ENCODE measurements at regions of chr1 and their contacts with region 1.

Region 1: DNA sequence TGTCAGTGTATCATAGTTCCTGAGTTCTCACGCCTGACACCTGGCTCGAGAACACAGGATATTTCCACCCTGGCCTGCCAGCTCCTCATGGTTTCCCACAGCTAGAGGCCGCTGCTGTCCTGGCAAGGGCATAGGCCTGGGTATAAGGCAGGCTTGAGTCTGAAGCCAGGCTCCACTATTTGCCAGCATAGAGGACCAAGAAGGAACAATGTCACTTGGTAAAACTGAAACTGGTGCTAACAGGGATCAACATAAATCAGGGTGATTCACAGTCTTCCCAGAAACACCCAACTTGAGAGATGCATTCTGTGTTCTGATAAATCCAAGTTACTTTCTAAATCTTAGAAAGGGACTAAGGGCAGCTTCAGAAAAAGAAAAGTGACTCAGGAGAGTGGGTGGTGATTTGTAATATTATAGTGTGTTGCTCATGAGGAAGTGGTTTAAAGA is 6.9 kb upstream of the S100A2 start:
- DNase-seq: peak; percentile 68
- H3K4me3 Mint-ChIP-seq: no peak overlapping the region
- H3K27ac Mint-ChIP-seq: peak overlapping the region; percentile 32
- H3K4me1 Mint-ChIP-seq: peaks cover 38% of the 10 kb centered on the region
- H3K27me3 Mint-ChIP-seq: peaks cover 11% of the 10 kb centered on the region

Region 2: DNA sequence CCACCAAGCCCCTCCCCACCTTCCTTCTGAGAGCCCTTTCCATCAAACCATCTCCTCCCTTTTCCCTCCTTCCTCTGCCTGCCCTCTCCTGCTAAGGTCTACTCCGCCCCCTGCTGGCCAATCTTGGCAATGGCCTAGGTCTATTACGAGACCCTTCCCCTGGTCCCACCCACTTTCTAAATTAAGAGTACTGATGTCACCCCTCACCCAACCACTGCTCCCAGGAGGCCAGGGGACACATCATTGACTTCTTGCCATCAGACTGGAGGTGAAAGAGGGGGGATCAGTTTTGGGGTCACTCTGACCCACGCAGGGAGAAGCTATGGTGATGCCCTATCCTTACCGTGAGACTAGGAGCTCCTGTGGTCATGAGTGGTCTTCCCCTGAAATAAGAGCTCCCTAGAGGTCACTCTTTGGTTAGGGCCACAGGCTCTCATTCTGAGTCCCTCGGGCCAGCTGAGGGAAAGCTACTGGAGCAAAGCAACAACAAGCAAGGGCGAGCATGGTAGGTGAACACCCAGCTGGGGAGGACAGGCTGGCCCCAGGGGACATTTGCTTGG is 77.5 kb before region 1 on chr1:
- CTCF ChIA-PET with region 1: no interaction called
- POLR2A ChIA-PET with region 1: no interaction called
- DNase-seq: peak; percentile 82
- H3K4me3 Mint-ChIP-seq: no peak overlapping the region
- H3K27ac Mint-ChIP-seq: no peak overlapping the region
- H3K4me1 Mint-ChIP-seq: no peaks in the 10 kb centered on the region
- H3K27me3 Mint-ChIP-seq: peaks cover 28% of the 10 kb centered on the region

Region 3: GRCh38 chr1:153510984-153511410 is 61.6 kb before region 1 on chr1:
- CTCF ChIA-PET with region 1: interaction called, 23 read pairs
- POLR2A ChIA-PET with region 1: no interaction called
- DNase-seq: peak; percentile 84
- H3K4me3 Mint-ChIP-seq: no peak overlapping the region
- H3K27ac Mint-ChIP-seq: peak overlapping the region; percentile 38
- H3K4me1 Mint-ChIP-seq: peaks cover 36% of the 10 kb centered on the region
- H3K27me3 Mint-ChIP-seq: no peaks in the 10 kb centered on the region

Region 4: DNA sequence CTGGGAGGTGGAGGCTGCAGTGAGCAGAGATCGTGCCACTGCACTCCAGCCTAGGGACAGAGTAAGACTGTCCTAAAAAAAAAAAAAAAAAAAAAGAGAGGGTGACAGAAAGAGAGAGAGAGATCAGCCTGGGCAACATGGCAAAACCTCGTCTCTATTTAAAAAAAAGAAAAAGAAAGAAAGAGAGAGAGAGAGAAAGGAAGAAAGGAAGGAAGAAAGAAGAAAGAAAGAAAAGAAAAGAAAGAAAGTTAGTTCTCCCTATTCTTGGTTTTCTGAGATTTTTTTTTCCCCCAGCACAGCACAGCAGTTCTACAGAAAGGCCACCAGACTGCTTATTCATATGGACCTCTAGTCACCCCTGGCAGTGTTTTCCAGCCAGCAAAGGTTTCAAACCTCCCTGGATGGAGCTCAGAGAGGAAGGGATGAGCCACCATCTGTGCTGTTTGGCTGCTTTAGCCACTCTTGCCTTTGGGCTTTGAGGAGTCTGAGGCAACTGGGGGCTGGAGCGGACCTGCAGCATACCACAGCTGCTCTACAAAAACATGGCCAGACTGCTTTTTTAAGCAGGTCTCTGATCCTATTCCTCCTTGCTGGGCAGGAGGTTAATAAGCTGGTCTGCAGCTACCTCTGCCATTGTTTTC is 47.4 kb before region 1 on chr1:
- CTCF ChIA-PET with region 1: interaction called, 11 read pairs
- POLR2A ChIA-PET with region 1: no interaction called
- DNase-seq: no peak
- H3K4me3 Mint-ChIP-seq: no peak overlapping the region
- H3K27ac Mint-ChIP-seq: peak overlapping the region; percentile 19
- H3K4me1 Mint-ChIP-seq: peaks cover 11% of the 10 kb centered on the region
- H3K27me3 Mint-ChIP-seq: no peaks in the 10 kb centered on the region

Region 5: GRCh38 chr1:153545067-153546055 is 27.2 kb before region 1 on chr1 and contains the start of gene S100A4:
- CTCF ChIA-PET with region 1: interaction called, 17 read pairs
- POLR2A ChIA-PET with region 1: interaction called, 3 read pairs
- DNase-seq: peak; percentile 97
- H3K4me3 Mint-ChIP-seq: peak within 1 kb of the TSS; percentile 91
- H3K27ac Mint-ChIP-seq: peak within 1 kb of the TSS; percentile 98
- H3K4me1 Mint-ChIP-seq: peaks cover 85% of the 10 kb centered on the region
- H3K27me3 Mint-ChIP-seq: no peaks in the 10 kb centered on the region
- total RNA-seq, gene S100A4: 678 to 905 TPM

Region 6: DNA sequence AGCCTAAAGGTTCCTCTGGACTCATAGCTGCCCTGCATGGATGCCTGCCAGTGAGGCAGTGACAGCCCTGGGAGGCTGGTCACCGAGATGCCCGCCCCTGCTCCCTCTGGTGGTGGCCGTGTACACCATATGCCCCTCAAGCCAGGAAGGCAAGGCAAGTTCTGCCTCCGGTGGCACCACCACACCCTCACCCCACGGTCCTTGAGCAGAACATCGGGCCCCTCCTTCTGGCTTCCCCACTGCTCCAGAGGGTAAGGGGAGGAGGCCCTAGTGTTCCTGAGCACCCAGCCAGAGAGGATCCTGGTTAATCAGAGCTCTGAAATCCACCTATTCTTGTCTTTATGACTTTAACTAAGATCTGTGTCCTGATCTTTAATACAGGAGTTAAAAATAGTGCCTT is 45.1 kb after region 1 on chr1:
- CTCF ChIA-PET with region 1: interaction called, 13 read pairs
- POLR2A ChIA-PET with region 1: no interaction called
- DNase-seq: peak; percentile 85
- H3K4me3 Mint-ChIP-seq: no peak overlapping the region
- H3K27ac Mint-ChIP-seq: peak overlapping the region; percentile 68
- H3K4me1 Mint-ChIP-seq: peaks cover 7% of the 10 kb centered on the region
- H3K27me3 Mint-ChIP-seq: no peaks in the 10 kb centered on the region

Region 7: GRCh38 chr1:153633716-153634665 is 61.4 kb after region 1 on chr1 and contains the start of gene CHTOP:
- CTCF ChIA-PET with region 1: interaction called, 10 read pairs
- POLR2A ChIA-PET with region 1: no interaction called
- DNase-seq: peak; percentile 98
- H3K4me3 Mint-ChIP-seq: peak within 1 kb of the TSS; percentile 92
- H3K27ac Mint-ChIP-seq: peak within 1 kb of the TSS; percentile 99
- H3K4me1 Mint-ChIP-seq: peaks cover 44% of the 10 kb centered on the region
- H3K27me3 Mint-ChIP-seq: no peaks in the 10 kb centered on the region
- total RNA-seq, gene CHTOP: 96.1 to 98.3 TPM

Region 8: GRCh38 chr1:153866045-153866850 is 293.7 kb after region 1 on chr1:
- CTCF ChIA-PET with region 1: no interaction called
- POLR2A ChIA-PET with region 1: no interaction called
- DNase-seq: no peak
- H3K4me3 Mint-ChIP-seq: no peak overlapping the region
- H3K27ac Mint-ChIP-seq: peak overlapping the region; percentile 76
- H3K4me1 Mint-ChIP-seq: peaks cover 27% of the 10 kb centered on the region
- H3K27me3 Mint-ChIP-seq: no peaks in the 10 kb centered on the region

Measured in activated CD4-positive, alpha-beta T cell treated with anti-CD3 and anti-CD28 coated beads, Interleukin-2, amount 10 ng/mL, durations not matched to agents 7 days and 5 days (primary cell).